A549 (cell line): ENCODE measurements at regions of chr7 and their contacts with region 1.

Region 1: DNA sequence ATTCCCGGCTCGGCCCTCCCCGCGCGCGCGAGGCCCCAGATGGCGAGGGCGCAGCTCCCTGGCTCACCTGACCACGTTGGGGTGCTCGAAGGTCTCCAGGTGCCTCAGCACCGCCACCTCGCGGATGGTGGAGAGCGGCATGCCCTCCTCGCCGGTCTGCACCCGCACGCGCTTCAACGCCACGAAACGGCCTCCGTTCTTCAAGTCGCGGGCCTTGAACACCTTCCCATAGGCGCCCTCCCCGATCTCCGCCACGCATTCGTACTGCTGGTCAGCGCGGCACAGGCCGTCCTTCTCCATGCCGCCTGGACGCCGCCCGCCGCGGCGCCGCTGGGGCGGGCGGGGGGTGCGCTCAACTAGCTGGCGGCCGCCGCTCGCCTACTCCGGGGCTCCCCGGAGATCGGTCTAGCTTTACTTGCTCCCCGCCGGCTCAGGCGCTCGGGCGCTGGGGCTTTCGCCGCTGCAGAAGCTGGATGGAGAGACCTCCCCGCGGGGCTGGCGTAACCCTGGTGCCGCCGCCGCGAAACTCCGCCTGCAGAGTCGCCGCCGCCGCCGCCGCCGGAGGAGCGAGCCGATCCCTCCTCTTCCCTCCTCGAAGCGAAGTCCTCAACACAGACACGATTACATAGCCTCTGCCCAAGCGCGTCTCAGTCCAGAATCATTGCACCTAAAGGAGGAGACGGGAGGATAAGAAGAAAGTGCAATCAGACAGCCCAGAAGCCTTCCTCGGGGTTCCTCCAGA is 3.2 kb downstream of the CDK6 start:
- DNase-seq: peak; percentile 58 to 90
- ATAC-seq: peak; percentile 72 to 82
- H3K4me3 ChIP-seq: peak overlapping the region; percentile 80
- H3K27ac ChIP-seq: peak overlapping the region; percentile 92 to 96
- H3K4me1 ChIP-seq: peaks cover 33% of the 10 kb centered on the region
- CTCF ChIP-seq: peak; percentile 80
- EP300 ChIP-seq: no peak
- POLR2A ChIP-seq: no peak
- RAD21 ChIP-seq: peak; percentile 82 to 92

Region 2: DNA sequence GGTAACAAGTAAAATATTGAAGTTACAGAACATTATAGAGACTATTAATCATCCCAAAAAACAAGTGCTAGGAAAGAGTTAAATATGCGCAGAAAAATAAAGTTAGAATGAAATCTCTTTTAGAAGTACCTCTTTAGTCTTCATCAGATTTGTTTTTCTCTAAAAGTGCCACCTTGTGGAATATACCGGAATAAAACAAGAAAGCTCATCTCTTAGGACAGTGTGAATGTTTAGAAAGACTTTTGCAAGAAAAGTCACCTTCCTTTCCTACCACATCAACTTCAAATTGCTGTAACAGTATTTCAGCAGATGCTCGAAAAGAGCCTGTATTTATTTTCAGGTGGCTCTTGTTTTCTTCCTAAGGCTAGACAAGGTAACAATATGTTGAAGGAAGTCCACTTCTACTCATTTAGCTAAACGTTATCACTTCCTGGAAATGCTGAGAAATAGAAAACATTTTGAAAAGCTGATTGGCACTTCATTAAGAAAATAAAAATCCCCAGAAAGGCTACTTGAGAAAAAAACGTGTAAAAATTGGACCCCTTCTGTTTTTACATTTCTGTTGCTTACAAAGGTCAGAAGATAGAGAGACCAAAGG is 223.2 kb before region 1 on chr7:
- CTCF ChIA-PET with region 1: interaction called, 18 read pairs
- POLR2A ChIA-PET with region 1: no interaction called
- DNase-seq: peak in 1 of 2 experiments; percentile 43
- ATAC-seq: peak; percentile 66 to 84; a peak in 4 of 6 replicates
- H3K4me3 ChIP-seq: no peak overlapping the region
- H3K27ac ChIP-seq: no peak overlapping the region
- H3K4me1 ChIP-seq: no peaks in the 10 kb centered on the region
- CTCF ChIP-seq: peak; percentile 52; the same call in 2 of the 3 replicates
- EP300 ChIP-seq: no peak
- POLR2A ChIP-seq: no peak
- RAD21 ChIP-seq: peak in 1 of 2 experiments; percentile 31; a peak in 2 of 5 replicates

Region 3: DNA sequence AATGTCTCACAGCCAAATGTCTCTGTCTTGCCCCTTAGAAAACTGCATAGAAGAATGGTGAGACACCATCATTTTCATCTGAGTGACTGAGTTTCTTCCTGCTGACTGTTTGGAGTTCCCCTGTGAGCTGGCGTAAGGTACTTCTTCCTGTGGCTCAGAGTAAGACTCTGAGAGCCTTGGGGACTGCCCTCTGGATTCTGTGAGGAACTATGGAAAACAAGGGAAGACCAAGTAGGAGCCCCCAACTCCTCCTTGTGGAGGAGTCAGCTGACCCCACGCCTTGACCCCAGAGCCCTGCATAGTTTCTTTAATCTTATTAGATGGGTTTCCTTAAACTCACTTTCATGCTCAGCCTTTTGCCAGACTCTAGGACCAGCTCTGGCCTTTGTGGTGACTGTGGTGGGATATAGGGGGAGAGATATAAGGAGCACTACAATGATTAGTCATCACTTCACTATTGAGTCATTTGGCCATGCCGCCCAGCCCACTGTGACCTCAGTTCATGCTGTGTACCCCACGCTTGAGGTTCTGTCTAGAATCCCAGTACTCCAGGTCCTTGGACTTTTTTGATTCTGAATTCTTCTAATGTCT is 191.2 kb before region 1 on chr7:
- CTCF ChIA-PET with region 1: interaction called, 22 read pairs
- POLR2A ChIA-PET with region 1: interaction called, 4 read pairs
- DNase-seq: peak in 1 of 2 experiments; percentile 43
- ATAC-seq: peak in 1 of 2 experiments; percentile 41; a peak in 3 of 6 replicates
- H3K4me3 ChIP-seq: no peak overlapping the region
- H3K27ac ChIP-seq: peak overlapping the region; percentile 52 to 90; a peak in 5 of 6 replicates
- H3K4me1 ChIP-seq: peaks cover 51% of the 10 kb centered on the region
- CTCF ChIP-seq: no peak
- EP300 ChIP-seq: no peak
- POLR2A ChIP-seq: no peak
- RAD21 ChIP-seq: no peak

Region 4: DNA sequence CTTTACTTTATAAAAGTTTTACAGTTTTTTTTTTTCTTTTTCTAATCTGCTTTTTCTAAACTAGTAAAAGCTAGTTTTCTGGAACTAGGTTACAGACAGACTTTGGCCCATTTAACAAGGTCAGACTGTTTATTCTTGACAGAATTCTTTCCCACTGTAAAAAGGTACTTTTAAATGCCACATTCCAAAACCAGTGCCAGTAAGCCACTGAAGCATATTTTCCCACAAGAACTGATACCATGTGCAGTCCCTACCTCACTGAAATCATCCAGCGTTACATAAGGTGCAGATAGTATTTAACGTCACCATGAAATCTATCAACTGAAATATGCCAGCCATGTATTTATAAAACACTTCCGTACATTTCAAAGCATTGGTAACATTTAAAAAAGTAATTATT is 118.4 kb before region 1 on chr7:
- CTCF ChIA-PET with region 1: interaction called, 18 read pairs
- POLR2A ChIA-PET with region 1: no interaction called
- DNase-seq: no peak
- ATAC-seq: no peak
- H3K4me3 ChIP-seq: no peak overlapping the region
- H3K27ac ChIP-seq: no peak overlapping the region
- H3K4me1 ChIP-seq: peaks cover 36% of the 10 kb centered on the region
- CTCF ChIP-seq: no peak
- EP300 ChIP-seq: no peak
- POLR2A ChIP-seq: no peak
- RAD21 ChIP-seq: no peak

Region 5: DNA sequence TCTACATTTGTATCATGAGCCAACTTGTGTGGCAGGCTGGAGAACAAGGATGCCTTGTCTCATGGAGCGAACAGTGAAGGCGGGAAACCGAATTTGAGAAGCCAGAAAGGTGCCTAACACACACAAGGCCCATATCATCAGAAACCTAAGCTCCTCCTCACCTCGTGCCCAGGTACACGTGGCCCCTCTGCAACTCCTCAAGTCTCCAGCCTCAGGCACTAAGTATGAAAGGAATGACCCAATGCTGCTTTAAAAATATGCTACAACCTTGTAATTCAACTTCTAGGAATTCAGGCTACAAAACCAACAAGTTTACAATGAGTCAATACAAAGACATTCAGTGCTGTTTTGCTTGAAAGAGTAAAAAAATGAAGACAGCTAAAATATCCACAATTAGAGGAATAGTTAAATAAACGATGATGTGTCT is 92.5 kb before region 1 on chr7:
- CTCF ChIA-PET with region 1: interaction called, 20 read pairs
- POLR2A ChIA-PET with region 1: interaction called, 3 read pairs
- DNase-seq: peak in 1 of 2 experiments; percentile 74
- ATAC-seq: peak; percentile 87 to 89
- H3K4me3 ChIP-seq: no peak overlapping the region
- H3K27ac ChIP-seq: peak overlapping the region; percentile 38 to 75
- H3K4me1 ChIP-seq: peaks cover 44% of the 10 kb centered on the region
- CTCF ChIP-seq: no peak
- EP300 ChIP-seq: no peak
- POLR2A ChIP-seq: no peak
- RAD21 ChIP-seq: 0 out of 5 replicates have a peak, but pooled peaks of 1 of the 2 experiments have one; percentile 25

Region 6: DNA sequence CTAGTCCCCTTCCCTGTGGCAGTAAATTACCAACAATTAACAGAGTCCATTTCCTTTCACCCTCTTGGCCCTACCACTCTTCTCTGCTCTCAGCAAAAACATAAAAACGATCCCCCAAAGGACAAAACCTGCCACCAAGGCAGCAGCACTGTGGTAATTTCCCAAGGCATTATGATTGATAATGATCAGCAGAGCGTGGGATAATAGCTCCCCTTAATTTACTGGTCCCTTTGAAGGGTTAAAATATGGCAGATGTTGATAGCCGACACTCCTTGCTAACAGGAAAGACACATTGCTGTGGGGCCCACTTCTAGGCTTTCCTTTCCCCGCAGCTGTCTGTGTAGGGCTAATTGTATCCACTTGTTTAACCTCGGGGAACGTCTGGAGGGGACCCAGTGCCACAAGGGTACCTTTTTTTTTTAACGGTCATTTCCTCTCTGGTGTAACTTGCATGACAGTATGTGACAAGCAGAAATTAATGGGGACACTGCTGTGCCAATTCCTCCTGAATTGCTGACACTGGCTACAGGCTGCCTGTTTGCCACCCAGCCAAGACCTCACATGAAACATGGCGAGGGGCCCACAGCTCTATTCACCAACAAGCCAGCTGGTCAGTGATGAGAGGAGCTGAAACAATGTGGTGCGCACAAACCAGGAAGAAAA is 78.1 kb before region 1 on chr7:
- CTCF ChIA-PET with region 1: interaction called, 11 read pairs
- POLR2A ChIA-PET with region 1: interaction called, 3 read pairs
- DNase-seq: no peak
- ATAC-seq: no peak
- H3K4me3 ChIP-seq: no peak overlapping the region
- H3K27ac ChIP-seq: peak overlapping the region; percentile 88 to 89
- H3K4me1 ChIP-seq: peaks cover 73% of the 10 kb centered on the region
- CTCF ChIP-seq: no peak
- EP300 ChIP-seq: no peak
- POLR2A ChIP-seq: no peak
- RAD21 ChIP-seq: no peak

Region 7: GRCh38 chr7:92813390-92814024 is 19.7 kb before region 1 on chr7:
- CTCF ChIA-PET with region 1: interaction called, 21 read pairs
- POLR2A ChIA-PET with region 1: no interaction called
- DNase-seq: no peak
- ATAC-seq: no peak
- H3K4me3 ChIP-seq: no peak overlapping the region
- H3K27ac ChIP-seq: peak overlapping the region; percentile 86 to 90
- H3K4me1 ChIP-seq: peaks cover 56% of the 10 kb centered on the region
- CTCF ChIP-seq: no peak
- EP300 ChIP-seq: no peak
- POLR2A ChIP-seq: no peak
- RAD21 ChIP-seq: no peak

Region 8: GRCh38 chr7:92944633-92945032 is 111.4 kb after region 1 on chr7:
- CTCF ChIA-PET with region 1: no interaction called
- POLR2A ChIA-PET with region 1: no interaction called
- DNase-seq: no peak
- ATAC-seq: no peak
- H3K4me3 ChIP-seq: no peak overlapping the region
- H3K27ac ChIP-seq: no peak overlapping the region
- H3K4me1 ChIP-seq: no peaks in the 10 kb centered on the region
- CTCF ChIP-seq: no peak
- EP300 ChIP-seq: no peak
- POLR2A ChIP-seq: no peak
- RAD21 ChIP-seq: no peak